ENCODE measurements at regions of chr14 and their contacts with region 1.

Region 1: GRCh38 chr14:50773632-50774541 is 57.1 kb downstream of the NIN start:
- DNase-seq: peak; percentile 68
- H3K4me3 ChIP-seq: no peak overlapping the region
- H3K27ac ChIP-seq: peak overlapping the region in 1 of 2 donors; percentile 22
- H3K4me1 ChIP-seq: no peaks in the 10 kb centered on the region
- H3K27me3 ChIP-seq: no peaks in the 10 kb centered on the region
- CTCF ChIP-seq: peak; percentile 78 to 94 (median 88)
- POLR2A ChIP-seq: no peak

Region 2: DNA sequence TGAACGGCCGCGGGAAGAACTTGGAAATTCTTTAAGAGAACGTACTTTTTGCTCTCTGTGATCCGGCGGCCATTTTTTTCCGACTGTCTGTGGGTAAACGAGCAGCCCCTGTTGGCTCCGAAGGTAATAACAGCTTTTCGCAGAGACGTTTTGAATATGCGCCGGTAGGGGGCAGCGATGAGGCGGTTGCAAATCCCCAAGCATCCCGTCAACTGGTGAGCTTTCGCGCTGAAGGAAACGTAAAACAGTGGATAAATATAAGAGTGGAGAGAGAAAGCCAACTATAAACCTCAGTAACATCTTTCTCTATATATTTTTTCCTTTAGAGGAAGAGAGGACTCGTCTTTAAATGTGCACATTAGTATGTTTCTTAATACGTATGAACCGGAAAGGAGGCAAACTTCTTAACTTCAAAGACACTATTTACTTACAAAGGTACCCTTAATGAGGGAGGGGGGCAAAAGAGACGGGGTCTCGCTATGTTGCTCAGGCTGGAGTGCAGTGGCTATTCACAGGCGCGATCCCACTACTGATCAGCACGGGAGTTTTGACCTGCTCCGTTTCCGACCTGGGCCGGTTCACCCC is 911.7 kb before region 1 on chr14:
- intact Hi-C with region 1: loop called (anchors 5 kb)
- DNase-seq: peak; percentile 88
- H3K4me3 ChIP-seq: peak overlapping the region; percentile 57 to 70
- H3K27ac ChIP-seq: peak overlapping the region; percentile 89 to 99
- H3K4me1 ChIP-seq: no peaks in the 10 kb centered on the region
- H3K27me3 ChIP-seq: no peaks in the 10 kb centered on the region
- CTCF ChIP-seq: peak; percentile 99 to 100 (median 100)
- POLR2A ChIP-seq: no peak

Region 3: DNA sequence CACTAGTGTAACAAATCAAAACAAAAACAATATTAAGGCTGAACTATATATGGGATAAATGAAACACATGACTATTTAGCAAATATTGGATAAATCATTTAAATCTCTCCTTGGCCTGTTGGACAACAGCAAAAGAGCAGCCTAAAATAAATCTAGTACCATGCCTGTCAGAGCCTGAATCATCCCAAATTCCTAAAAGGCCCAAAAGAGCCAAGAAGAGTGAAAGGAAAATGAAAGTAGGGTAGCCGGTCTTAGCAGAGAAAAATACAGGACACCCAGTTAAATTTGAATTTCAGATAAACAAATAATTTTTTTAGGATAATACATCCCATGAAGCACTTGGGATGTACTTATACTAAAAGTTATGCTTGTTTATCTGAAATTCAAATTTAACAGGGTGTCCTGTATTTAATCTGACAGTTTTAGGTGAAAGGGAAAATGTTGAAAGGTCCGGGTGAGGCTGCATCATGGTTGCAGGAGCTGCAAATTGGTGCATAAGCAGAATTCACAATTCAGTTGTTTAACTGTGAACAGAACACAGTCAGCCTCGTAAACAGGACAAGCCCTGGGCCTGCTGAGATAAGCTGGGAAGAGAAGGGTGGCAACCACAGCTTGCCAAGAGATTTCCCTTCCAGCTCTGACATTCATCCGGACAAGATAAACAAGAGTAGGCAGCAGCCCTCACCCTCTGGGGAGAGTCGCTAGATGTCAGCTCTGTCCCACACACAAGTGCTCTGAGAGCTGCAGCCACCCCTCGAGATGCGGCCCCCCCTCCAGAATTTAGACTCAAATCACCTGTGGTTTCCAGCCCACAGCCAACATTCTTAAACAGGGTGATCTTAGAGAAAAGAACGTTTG is 431.4 kb before region 1 on chr14:
- intact Hi-C with region 1: loop called (anchors 10 kb)
- DNase-seq: peak; percentile 80
- H3K4me3 ChIP-seq: peak overlapping the region in 1 of 2 donors; percentile 1
- H3K27ac ChIP-seq: peak overlapping the region; percentile 37 to 67
- H3K4me1 ChIP-seq: peaks cover 13% of the 10 kb centered on the region
- H3K27me3 ChIP-seq: no peaks in the 10 kb centered on the region
- CTCF ChIP-seq: peak in 3 of 4 experiments; percentile 43 to 54 (median 46)
- POLR2A ChIP-seq: no peak

Region 4: GRCh38 chr14:50559990-50560930 is 213.6 kb before region 1 on chr14 and contains the start of gene ATL1:
- intact Hi-C with region 1: loop called (anchors 5 kb)
- DNase-seq: peak; percentile 67
- H3K4me3 ChIP-seq: peak within 1 kb of the TSS; percentile 66 to 76
- H3K27ac ChIP-seq: peak within 1 kb of the TSS; percentile 95 to 96
- H3K4me1 ChIP-seq: no peaks in the 10 kb centered on the region
- H3K27me3 ChIP-seq: no peaks in the 10 kb centered on the region
- CTCF ChIP-seq: peak in 1 of 4 experiments; percentile 11
- POLR2A ChIP-seq: peak; percentile 26
- total RNA-seq, gene ATL1: 5.3 to 26.5 TPM

Region 5: GRCh38 chr14:50619556-50620141 is 154.2 kb before region 1 on chr14:
- intact Hi-C with region 1: loop called (anchors 2 kb)
- DNase-seq: no peak
- H3K4me3 ChIP-seq: no peak overlapping the region
- H3K27ac ChIP-seq: no peak overlapping the region
- H3K4me1 ChIP-seq: no peaks in the 10 kb centered on the region
- H3K27me3 ChIP-seq: no peaks in the 10 kb centered on the region
- CTCF ChIP-seq: peak; percentile 14 to 75 (median 68)
- POLR2A ChIP-seq: no peak

Region 6: DNA sequence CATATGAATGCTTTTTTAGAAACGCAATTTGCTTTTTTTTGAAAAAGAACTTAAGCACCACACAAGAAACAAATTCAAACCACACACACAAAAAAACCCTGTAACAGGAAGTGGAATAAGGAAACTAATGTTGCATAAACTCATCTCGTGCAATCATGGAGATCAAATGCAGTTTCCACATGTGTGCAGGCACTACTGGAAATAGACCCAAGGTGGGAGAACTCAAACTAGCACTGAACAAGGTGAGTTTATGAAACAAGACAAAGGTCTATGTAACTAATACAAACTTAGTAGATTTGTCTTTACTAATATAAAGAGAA is 39.6 kb after region 1 on chr14:
- intact Hi-C with region 1: no loop called
- DNase-seq: no peak
- H3K4me3 ChIP-seq: no peak overlapping the region
- H3K27ac ChIP-seq: no peak overlapping the region
- H3K4me1 ChIP-seq: no peaks in the 10 kb centered on the region
- H3K27me3 ChIP-seq: no peaks in the 10 kb centered on the region
- CTCF ChIP-seq: no peak
- POLR2A ChIP-seq: no peak

Region 7: GRCh38 chr14:50860478-50861086 is 86.7 kb after region 1 on chr14:
- intact Hi-C with region 1: loop called (anchors 5 kb)
- DNase-seq: peak; percentile 66
- H3K4me3 ChIP-seq: peak overlapping the region; percentile 31 to 33
- H3K27ac ChIP-seq: peak overlapping the region; percentile 48 to 66
- H3K4me1 ChIP-seq: no peaks in the 10 kb centered on the region
- H3K27me3 ChIP-seq: no peaks in the 10 kb centered on the region
- CTCF ChIP-seq: peak; percentile 49 to 71 (median 61)
- POLR2A ChIP-seq: no peak

Measured in prostate gland (tissue), 2 donors.